Sciatic nerve (tissue), 2 donors: ENCODE measurements at regions of chr5 and their contacts with region 1.

Region 1: GRCh38 chr5:136799806-136800372 is 434.5 kb upstream of the TRPC7 start:
- DNase-seq: no peak
- ATAC-seq: no peak

Region 2: GRCh38 chr5:136836093-136836492 is 36.2 kb after region 1 on chr5:
- intact Hi-C with region 1: no loop called
- DNase-seq: no peak
- ATAC-seq: no peak

Region 3: GRCh38 chr5:136853971-136854370 is 54.1 kb after region 1 on chr5:
- intact Hi-C with region 1: loop called (anchors 2 kb)
- DNase-seq: no peak
- ATAC-seq: no peak

Region 4: DNA sequence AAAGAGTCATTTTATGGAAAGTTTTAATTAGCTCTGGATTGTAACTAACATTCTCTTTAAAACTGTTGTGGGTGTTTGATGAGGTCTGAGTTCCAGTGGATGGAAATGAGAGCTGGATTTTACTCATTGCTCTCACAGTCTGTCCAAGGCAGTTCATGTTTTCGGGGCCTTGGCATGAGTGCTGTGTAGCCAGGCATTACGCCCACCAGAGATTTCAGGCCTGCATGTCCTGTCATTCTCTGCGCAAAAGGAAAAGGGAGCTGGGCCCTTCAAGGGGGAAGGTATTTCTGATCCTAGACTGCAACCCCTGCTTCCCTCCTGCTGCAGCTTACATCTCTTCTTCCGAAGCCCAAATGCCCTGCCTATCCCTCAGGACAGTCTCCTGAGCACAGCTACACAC is 65.1 kb after region 1 on chr5:
- intact Hi-C with region 1: no loop called
- DNase-seq: no peak
- ATAC-seq: no peak

Region 5: DNA sequence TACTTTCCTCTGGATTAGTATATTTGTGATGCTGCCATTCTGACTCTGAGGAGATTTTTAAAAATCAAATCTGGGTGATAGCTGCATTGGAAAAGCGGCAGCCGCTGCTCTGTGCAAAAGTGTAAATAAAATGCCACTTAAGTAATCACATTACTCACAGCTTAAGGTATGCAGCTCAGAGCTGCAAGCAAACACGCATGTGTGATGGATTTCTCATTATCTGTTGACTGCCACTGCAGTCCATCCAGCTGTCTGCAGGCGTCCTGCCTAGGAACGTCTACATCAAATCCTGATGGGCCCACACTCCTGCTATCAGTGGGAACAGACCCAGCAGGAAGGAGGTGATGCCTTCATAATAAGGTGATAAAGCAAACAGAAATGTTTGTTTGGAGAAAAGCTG is 482.3 kb after region 1 on chr5:
- intact Hi-C with region 1: no loop called
- DNase-seq: no peak
- ATAC-seq: no peak